ENCODE measurements at regions of chr1 and their contacts with region 1.

Region 1: GRCh38 chr1:36099681-36100341 is 11.1 kb downstream of the ADPRS start:
- DNase-seq: no peak
- H3K4me3 ChIP-seq: peak overlapping the region in 1 of 4 donors; percentile 34
- H3K27ac ChIP-seq: peak overlapping the region in 3 of 4 donors; percentile 32 to 44 (median 40)
- H3K4me1 ChIP-seq: peaks cover 6 to 18% (median 6%) of the 10 kb centered on the region in 3 donors
- H3K27me3 ChIP-seq: no peaks in the 10 kb centered on the region
- CTCF ChIP-seq: peak; percentile 77 to 92 (median 84)
- POLR2A ChIP-seq: no peak

Region 2: DNA sequence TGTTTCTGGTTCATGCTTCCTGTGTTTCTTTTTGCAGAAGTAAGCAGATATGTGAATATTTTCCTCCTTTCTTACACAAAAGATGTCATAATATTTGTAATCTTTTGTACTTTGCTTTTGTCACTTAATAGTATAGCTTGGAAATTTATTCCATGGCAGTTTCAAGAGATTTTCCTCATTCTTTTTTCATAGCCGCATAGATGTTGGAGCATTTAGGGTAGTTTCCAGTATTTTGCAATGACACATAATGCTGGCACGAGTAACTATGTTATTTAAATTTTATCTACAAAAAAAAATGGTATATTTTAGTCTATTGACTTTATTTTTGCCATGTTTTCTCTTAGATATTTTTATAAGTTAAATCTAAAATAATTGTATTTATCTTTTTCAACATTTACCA is 128.2 kb before region 1 on chr1:
- intact Hi-C with region 1: no loop called
- DNase-seq: no peak
- H3K4me3 ChIP-seq: no peak overlapping the region
- H3K27ac ChIP-seq: no peak overlapping the region
- H3K4me1 ChIP-seq: no peaks in the 10 kb centered on the region
- H3K27me3 ChIP-seq: no peaks in the 10 kb centered on the region
- CTCF ChIP-seq: no peak
- POLR2A ChIP-seq: no peak

Region 3: GRCh38 chr1:36134505-36135329 is 34.9 kb after region 1 on chr1:
- intact Hi-C with region 1: loop called (anchors 5 kb)
- DNase-seq: no peak
- H3K4me3 ChIP-seq: no peak overlapping the region
- H3K27ac ChIP-seq: peak overlapping the region; percentile 76 to 86 (median 82)
- H3K4me1 ChIP-seq: peaks cover 35 to 62% (median 44%) of the 10 kb centered on the region in 3 donors
- H3K27me3 ChIP-seq: no peaks in the 10 kb centered on the region
- CTCF ChIP-seq: peak; percentile 20 to 63 (median 57)
- POLR2A ChIP-seq: no peak

Region 4: GRCh38 chr1:36187800-36188593 is 88.2 kb after region 1 on chr1:
- intact Hi-C with region 1: loop called (anchors 5 kb)
- DNase-seq: peak; percentile 47
- H3K4me3 ChIP-seq: no peak overlapping the region
- H3K27ac ChIP-seq: peak overlapping the region; percentile 67 to 91 (median 84)
- H3K4me1 ChIP-seq: peaks cover 5 to 20% (median 9%) of the 10 kb centered on the region in 3 donors
- H3K27me3 ChIP-seq: no peaks in the 10 kb centered on the region
- CTCF ChIP-seq: peak; percentile 79 to 95 (median 92)
- POLR2A ChIP-seq: no peak

Region 5: GRCh38 chr1:36420836-36421664 is 321.2 kb after region 1 on chr1:
- intact Hi-C with region 1: loop called (anchors 10 kb)
- DNase-seq: no peak
- H3K4me3 ChIP-seq: no peak overlapping the region
- H3K27ac ChIP-seq: peak overlapping the region in 2 of 4 donors; percentile 12 to 26
- H3K4me1 ChIP-seq: peaks cover 0 to 13% (median 0%) of the 10 kb centered on the region in 3 donors
- H3K27me3 ChIP-seq: no peaks in the 10 kb centered on the region
- CTCF ChIP-seq: peak; percentile 88 to 95 (median 92)
- POLR2A ChIP-seq: no peak

Measured in esophagus squamous epithelium (tissue), 5 donors.